Activated CD8-positive, alpha-beta T cell treated with anti-CD3 and anti-CD28 coated beads for 36 hours (primary cell): ENCODE measurements at regions of chr5 and their contacts with region 1.

Region 1: DNA sequence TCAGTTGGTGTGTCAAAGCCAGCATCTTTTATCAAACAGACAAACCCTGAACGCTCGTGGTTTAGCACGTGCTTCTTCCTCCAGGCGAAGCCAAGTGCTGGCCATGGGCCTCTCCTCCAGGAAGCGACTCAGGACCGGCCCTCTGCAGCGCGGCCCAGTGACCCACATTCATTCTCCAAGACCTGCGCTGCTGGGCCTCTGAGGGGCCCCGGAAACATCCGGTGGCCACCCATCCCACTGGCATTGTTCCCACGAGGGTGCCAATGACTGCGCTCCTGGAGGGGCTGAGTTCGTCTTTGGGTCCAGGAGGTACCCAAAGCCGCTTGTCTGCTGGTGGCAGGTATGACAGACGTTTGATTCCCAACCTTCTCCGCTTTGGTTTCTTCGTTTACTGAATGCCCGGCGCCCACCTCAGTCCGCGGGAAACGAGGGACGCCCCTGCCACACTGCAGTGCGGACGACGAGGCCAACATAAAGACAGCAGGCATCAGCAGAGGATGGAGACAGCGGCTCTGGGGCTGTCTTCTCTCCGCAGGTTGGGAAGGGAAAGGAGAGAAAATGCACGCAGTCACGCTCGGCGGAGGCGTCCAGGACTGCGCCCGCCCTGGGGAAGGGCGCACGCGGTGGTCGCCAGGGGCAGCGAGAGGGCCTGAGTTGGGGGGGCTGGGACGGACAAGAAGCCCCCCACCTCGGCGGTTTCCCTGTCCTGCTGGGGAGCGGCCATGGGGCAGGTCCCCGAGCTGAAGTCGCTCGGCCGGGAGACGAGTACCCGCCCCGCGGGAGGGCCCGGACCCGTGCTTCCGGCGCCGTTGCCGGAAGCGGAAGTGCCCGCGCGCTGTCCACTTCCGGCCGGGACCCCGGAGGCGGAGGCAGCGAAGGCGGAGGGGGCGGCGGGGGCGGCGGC is at the start of gene EXOC3:
- DNase-seq: peak; percentile 72
- ATAC-seq: peak; percentile 88
- H3K4me3 Mint-ChIP-seq: peak within 1 kb of the TSS; percentile 96
- H3K27ac Mint-ChIP-seq: peak within 1 kb of the TSS; percentile 93
- H3K4me1 Mint-ChIP-seq: peaks cover 40% of the 10 kb centered on the region
- H3K27me3 Mint-ChIP-seq: no peaks in the 10 kb centered on the region
- CTCF ChIP-seq: no peak
- total RNA-seq, gene EXOC3: 65.9 to 67.6 TPM

Region 2: GRCh38 chr5:11898-12297 is 430.7 kb before region 1 on chr5:
- CTCF ChIA-PET with region 1: no interaction called
- POLR2A ChIA-PET with region 1: no interaction called
- intact Hi-C with region 1: no loop called
- DNase-seq: no peak
- ATAC-seq: no peak
- H3K4me3 Mint-ChIP-seq: no peak overlapping the region
- H3K27ac Mint-ChIP-seq: no peak overlapping the region
- H3K4me1 Mint-ChIP-seq: no peaks in the 10 kb centered on the region
- H3K27me3 Mint-ChIP-seq: peaks cover 6% of the 10 kb centered on the region
- CTCF ChIP-seq: no peak

Region 3: DNA sequence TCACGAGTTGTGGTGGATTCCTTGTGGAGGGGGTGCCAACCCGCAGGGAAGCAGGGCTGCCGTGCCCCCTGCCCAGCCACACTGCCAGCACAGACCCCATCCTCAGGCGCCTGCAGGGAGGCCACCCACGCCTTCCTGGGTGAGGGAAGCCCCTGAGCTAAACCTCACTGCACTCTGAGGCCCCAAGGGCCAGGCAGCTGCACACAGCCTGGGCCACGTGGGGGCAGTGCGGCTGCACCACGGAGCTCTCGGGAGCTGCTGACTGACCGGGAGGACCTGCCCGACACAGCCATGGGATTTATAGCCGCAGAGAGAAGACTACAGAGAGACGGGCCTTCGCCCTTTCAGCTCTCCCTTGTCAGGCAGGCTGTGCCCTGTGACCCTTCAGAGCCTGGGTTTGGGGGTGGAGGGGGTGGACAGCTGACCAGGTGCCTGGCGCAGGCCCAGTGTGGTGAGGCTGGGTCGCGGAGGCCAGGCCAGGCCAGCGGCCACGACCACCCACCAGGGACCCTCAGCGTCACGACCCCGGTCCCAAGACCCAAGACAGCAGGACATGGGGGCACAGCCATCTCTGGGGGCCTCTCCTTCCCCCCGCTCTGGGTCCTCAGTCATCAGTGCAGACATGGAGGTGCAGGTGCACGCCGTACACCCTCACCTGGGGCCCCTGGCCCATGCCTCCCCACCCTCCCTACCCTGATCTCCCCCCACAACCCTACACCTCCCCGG is 125.3 kb before region 1 on chr5:
- CTCF ChIA-PET with region 1: interaction called, 24 read pairs
- POLR2A ChIA-PET with region 1: interaction called, 3 read pairs
- intact Hi-C with region 1: no loop called
- DNase-seq: peak; percentile 83
- ATAC-seq: peak; percentile 87
- H3K4me3 Mint-ChIP-seq: no peak overlapping the region
- H3K27ac Mint-ChIP-seq: peak overlapping the region; percentile 67
- H3K4me1 Mint-ChIP-seq: peaks cover 16% of the 10 kb centered on the region
- H3K27me3 Mint-ChIP-seq: peaks cover 17% of the 10 kb centered on the region
- CTCF ChIP-seq: peak; percentile 86

Region 4: GRCh38 chr5:458547-459353 is 16.2 kb after region 1 on chr5:
- CTCF ChIA-PET with region 1: interaction called, 5 read pairs
- POLR2A ChIA-PET with region 1: interaction called, 20 read pairs
- intact Hi-C with region 1: no loop called
- DNase-seq: peak; percentile 83
- ATAC-seq: peak; percentile 86
- H3K4me3 Mint-ChIP-seq: peak overlapping the region; percentile 54
- H3K27ac Mint-ChIP-seq: peak overlapping the region; percentile 95
- H3K4me1 Mint-ChIP-seq: peaks cover 67% of the 10 kb centered on the region
- H3K27me3 Mint-ChIP-seq: no peaks in the 10 kb centered on the region
- CTCF ChIP-seq: no peak

Region 5: DNA sequence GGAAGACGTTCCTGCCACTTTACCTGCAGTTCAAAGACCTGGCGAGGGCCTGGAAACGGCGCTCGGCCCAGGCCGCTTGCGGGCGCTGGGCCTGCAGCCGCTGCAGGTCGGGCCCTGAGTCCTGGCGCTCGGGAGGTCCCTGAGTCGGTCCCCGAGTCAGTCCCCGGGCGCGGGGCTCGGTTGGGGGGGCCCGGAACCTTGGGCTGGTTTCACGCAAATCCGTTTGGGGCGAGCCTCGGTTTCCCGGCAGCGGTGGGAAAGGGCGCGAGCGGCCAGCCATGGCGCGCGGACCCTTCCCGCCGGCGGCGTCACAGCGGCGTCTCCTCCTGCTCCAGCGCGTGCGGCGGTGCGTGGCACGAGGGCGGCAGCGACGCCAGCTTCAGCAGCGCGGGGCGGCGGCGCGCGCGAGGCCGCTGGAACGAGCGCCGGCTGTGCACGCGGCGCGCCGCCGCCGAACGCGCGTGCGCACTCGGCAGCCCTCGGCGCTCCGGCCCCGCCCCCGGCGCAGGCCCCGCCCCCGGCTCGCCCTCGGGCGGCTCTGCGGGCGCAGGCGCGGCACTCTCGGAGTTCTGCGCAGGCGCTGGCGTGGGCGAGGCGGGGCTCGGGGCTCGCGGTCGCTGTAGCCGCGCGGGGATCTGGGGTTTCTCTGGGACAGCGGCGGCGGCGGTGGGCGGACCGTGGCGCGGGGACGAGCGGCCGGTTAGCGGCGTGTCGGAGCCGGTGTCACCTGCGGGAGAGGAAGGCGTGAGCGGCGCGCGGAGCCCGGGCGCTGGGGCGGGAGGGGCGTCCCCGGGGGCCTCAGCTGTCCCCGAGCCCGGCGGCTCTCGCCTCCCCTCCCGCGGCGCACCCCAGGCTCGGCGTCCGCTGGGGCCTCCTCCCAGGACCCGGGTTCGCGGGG is 30.3 kb after region 1 on chr5:
- CTCF ChIA-PET with region 1: interaction called, 28 read pairs
- POLR2A ChIA-PET with region 1: interaction called, 8 read pairs
- intact Hi-C with region 1: no loop called
- DNase-seq: peak; percentile 89
- ATAC-seq: peak; percentile 84
- H3K4me3 Mint-ChIP-seq: peak overlapping the region; percentile 90
- H3K27ac Mint-ChIP-seq: peak overlapping the region; percentile 84
- H3K4me1 Mint-ChIP-seq: peaks cover 20% of the 10 kb centered on the region
- H3K27me3 Mint-ChIP-seq: peaks cover 2% of the 10 kb centered on the region
- CTCF ChIP-seq: no peak

Region 6: GRCh38 chr5:493119-493701 is 50.6 kb after region 1 on chr5:
- CTCF ChIA-PET with region 1: no interaction called
- POLR2A ChIA-PET with region 1: no interaction called
- intact Hi-C with region 1: no loop called
- DNase-seq: no peak
- ATAC-seq: no peak
- H3K4me3 Mint-ChIP-seq: no peak overlapping the region
- H3K27ac Mint-ChIP-seq: no peak overlapping the region
- H3K4me1 Mint-ChIP-seq: no peaks in the 10 kb centered on the region
- H3K27me3 Mint-ChIP-seq: peaks cover 1% of the 10 kb centered on the region
- CTCF ChIP-seq: no peak

Region 7: GRCh38 chr5:611721-612486 is 169.3 kb after region 1 on chr5 and contains the start of gene CEP72:
- CTCF ChIA-PET with region 1: interaction called, 12 read pairs
- POLR2A ChIA-PET with region 1: no interaction called
- intact Hi-C with region 1: no loop called
- DNase-seq: peak; percentile 93
- ATAC-seq: peak; percentile 98
- H3K4me3 Mint-ChIP-seq: peak within 1 kb of the TSS; percentile 80
- H3K27ac Mint-ChIP-seq: peak within 1 kb of the TSS; percentile 83
- H3K4me1 Mint-ChIP-seq: peaks cover 48% of the 10 kb centered on the region
- H3K27me3 Mint-ChIP-seq: peaks cover 10% of the 10 kb centered on the region
- CTCF ChIP-seq: no peak
- total RNA-seq, gene CEP72: 27.0 to 28.9 TPM